ENCODE measurements at regions of chr11 and their contacts with region 1.

Region 1: GRCh38 chr11:42299780-42300179 is 840.3 kb upstream of the LRRC4C start:
- DNase-seq: no peak
- ATAC-seq: no peak
- H3K4me3 ChIP-seq: no peak overlapping the region
- H3K4me3 Mint-ChIP-seq: no peak overlapping the region
- H3K27ac ChIP-seq: no peak overlapping the region
- H3K27ac Mint-ChIP-seq: no peak overlapping the region
- H3K4me1 ChIP-seq: no peaks in the 10 kb centered on the region
- H3K4me1 Mint-ChIP-seq: no peaks in the 10 kb centered on the region
- H3K27me3 ChIP-seq: no peaks in the 10 kb centered on the region
- H3K27me3 Mint-ChIP-seq: no peaks in the 10 kb centered on the region
- CTCF ChIP-seq: no peak

Region 2: GRCh38 chr11:42249401-42249800 is 50.4 kb before region 1 on chr11:
- CTCF ChIA-PET with region 1: no interaction called
- POLR2A ChIA-PET with region 1: no interaction called
- intact Hi-C with region 1: loop called in 1 of 2 experiments (anchors 10 kb)
- DNase-seq: no peak
- ATAC-seq: no peak
- H3K4me3 ChIP-seq: no peak overlapping the region
- H3K4me3 Mint-ChIP-seq: no peak overlapping the region
- H3K27ac ChIP-seq: no peak overlapping the region
- H3K27ac Mint-ChIP-seq: no peak overlapping the region
- H3K4me1 ChIP-seq: no peaks in the 10 kb centered on the region
- H3K4me1 Mint-ChIP-seq: no peaks in the 10 kb centered on the region
- H3K27me3 ChIP-seq: no peaks in the 10 kb centered on the region
- H3K27me3 Mint-ChIP-seq: no peaks in the 10 kb centered on the region
- CTCF ChIP-seq: no peak